MCF 10A (cell line): ENCODE measurements at regions of chr15 and their contacts with region 1.

Region 1: DNA sequence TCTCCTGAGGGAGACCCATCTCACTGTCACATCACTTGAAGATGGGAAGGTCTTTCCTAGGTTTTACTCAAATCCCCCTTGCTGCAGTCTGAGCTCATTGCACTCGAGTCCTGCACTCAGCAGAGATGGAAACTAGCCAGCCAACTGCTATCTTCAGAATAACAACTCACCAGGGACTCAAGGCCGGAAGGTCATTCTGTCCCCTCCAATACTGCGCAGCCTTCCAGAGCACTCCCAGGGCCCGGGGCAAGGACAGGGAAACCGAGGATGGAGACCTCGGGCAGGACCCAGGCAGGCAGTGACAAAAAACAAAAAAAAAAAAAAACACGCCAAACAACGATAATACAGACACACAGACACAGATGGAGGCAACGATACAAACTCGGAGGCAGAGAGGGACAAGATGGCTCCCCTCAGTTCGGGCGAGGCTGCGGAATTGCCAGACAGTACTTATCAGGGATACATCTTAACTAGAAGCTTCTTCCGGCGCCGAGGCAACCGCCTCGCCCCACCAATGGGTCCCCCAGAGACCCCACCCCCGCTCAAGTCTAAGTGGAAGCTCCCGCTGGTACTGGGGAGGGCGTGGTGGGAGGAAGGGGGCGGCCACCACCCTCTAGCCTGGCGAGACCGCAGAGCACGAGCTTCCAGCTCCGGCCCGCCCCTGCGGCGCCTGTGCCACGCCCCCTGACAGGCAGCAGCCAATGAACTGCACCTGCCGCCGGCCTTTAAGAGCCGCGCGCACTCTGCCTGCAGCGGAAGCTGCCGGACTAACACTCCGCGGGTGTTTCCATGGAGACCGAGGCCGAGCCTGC is 7.0 kb upstream of the MAP1A start:
- DNase-seq: peak; percentile 96
- H3K4me3 Mint-ChIP-seq: peak overlapping the region; percentile 94
- H3K27ac Mint-ChIP-seq: peak overlapping the region; percentile 63
- H3K4me1 Mint-ChIP-seq: peaks cover 13% of the 10 kb centered on the region
- H3K27me3 Mint-ChIP-seq: no peaks in the 10 kb centered on the region
- CTCF ChIP-seq: no peak

Region 2: GRCh38 chr15:43081283-43081682 is 429.1 kb before region 1 on chr15:
- CTCF ChIA-PET with region 1: no interaction called
- POLR2A ChIA-PET with region 1: no interaction called
- intact Hi-C with region 1: no loop called
- DNase-seq: no peak
- H3K4me3 Mint-ChIP-seq: no peak overlapping the region
- H3K27ac Mint-ChIP-seq: no peak overlapping the region
- H3K4me1 Mint-ChIP-seq: peaks cover 5% of the 10 kb centered on the region
- H3K27me3 Mint-ChIP-seq: no peaks in the 10 kb centered on the region
- CTCF ChIP-seq: no peak

Region 3: GRCh38 chr15:43440721-43441281 is 69.6 kb before region 1 on chr15:
- CTCF ChIA-PET with region 1: interaction called, 46 read pairs
- POLR2A ChIA-PET with region 1: interaction called, 7 read pairs
- intact Hi-C with region 1: loop called (anchors 1 kb)
- DNase-seq: peak; percentile 97
- H3K4me3 Mint-ChIP-seq: no peak overlapping the region
- H3K27ac Mint-ChIP-seq: no peak overlapping the region
- H3K4me1 Mint-ChIP-seq: peaks cover 6% of the 10 kb centered on the region
- H3K27me3 Mint-ChIP-seq: no peaks in the 10 kb centered on the region
- CTCF ChIP-seq: peak; percentile 61

Region 4: DNA sequence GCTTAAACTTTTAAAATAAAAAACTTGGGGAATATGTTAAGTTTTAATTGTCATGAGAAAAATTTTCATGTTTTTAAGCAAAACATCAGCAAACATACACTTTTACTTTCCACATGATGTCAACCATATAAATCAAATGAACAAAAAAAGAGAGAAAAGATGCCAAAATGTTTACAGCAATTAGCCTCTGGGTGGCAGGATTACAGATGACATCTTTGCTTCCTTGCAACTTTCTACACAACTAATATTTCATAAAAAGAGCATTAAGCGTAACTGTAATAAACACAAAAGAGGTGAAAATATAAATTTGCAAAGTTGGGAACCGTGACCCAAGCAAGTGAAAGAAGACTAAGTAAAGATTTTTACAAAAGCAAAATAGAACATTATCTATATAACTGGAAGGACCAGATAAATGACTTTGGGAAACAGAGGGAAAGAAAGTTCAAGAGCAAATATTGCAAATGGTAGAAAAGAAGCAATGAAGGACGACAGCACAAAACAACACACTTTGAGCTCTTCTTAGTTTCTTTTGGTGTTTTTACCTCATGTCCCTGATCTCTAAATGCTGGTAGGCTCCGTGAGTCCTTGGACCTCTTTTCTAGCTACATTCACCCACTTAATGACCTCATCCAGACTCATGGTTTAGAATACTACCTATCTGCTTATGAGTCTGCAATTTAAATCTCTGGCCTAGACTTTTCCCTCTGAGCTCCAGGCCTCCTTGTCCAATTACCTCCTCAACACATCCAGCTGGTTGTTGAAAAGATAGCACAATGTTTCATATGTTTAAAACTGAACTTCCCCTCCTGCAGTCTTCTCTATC is 26.9 kb before region 1 on chr15:
- CTCF ChIA-PET with region 1: interaction called, 4 read pairs
- POLR2A ChIA-PET with region 1: interaction called, 3 read pairs
- intact Hi-C with region 1: loop called (anchors 1 kb)
- DNase-seq: peak; percentile 8
- H3K4me3 Mint-ChIP-seq: no peak overlapping the region
- H3K27ac Mint-ChIP-seq: no peak overlapping the region
- H3K4me1 Mint-ChIP-seq: peaks cover 14% of the 10 kb centered on the region
- H3K27me3 Mint-ChIP-seq: no peaks in the 10 kb centered on the region
- CTCF ChIP-seq: peak; percentile 36

Region 5: GRCh38 chr15:43492673-43493601 is 17.5 kb before region 1 on chr15 and contains the start of gene TP53BP1:
- CTCF ChIA-PET with region 1: interaction called, 7 read pairs
- POLR2A ChIA-PET with region 1: interaction called, 60 read pairs
- intact Hi-C with region 1: no loop called
- DNase-seq: peak; percentile 91
- H3K4me3 Mint-ChIP-seq: peak within 1 kb of the TSS; percentile 82
- H3K27ac Mint-ChIP-seq: peak within 1 kb of the TSS; percentile 91
- H3K4me1 Mint-ChIP-seq: peaks cover 9% of the 10 kb centered on the region
- H3K27me3 Mint-ChIP-seq: no peaks in the 10 kb centered on the region
- CTCF ChIP-seq: no peak
- total RNA-seq, gene TP53BP1: 38.8 and 53.5 TPM in 2 replicates

Region 6: DNA sequence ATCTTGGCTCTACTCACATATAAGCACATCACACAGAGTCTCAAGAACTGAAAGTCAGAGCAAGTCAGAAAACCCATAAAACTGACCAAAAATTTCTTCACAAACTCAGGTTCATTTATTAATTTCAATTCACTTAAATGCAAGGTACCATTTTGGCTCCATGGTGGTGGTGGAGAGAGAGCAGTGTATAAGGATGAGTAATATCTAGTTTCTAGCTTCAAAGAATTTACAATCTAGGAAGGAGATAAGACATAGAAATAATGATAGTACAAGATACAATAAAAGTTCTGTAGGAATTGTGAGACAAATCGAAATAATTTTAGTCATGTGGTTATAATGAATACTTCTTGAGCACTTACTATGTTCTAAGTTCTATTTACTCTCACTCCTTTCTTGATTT is 10.8 kb before region 1 on chr15:
- CTCF ChIA-PET with region 1: interaction called, 7 read pairs
- POLR2A ChIA-PET with region 1: interaction called, 60 read pairs
- intact Hi-C with region 1: no loop called
- DNase-seq: no peak
- H3K4me3 Mint-ChIP-seq: no peak overlapping the region
- H3K27ac Mint-ChIP-seq: no peak overlapping the region
- H3K4me1 Mint-ChIP-seq: no peaks in the 10 kb centered on the region
- H3K27me3 Mint-ChIP-seq: no peaks in the 10 kb centered on the region
- CTCF ChIP-seq: no peak

Region 7: DNA sequence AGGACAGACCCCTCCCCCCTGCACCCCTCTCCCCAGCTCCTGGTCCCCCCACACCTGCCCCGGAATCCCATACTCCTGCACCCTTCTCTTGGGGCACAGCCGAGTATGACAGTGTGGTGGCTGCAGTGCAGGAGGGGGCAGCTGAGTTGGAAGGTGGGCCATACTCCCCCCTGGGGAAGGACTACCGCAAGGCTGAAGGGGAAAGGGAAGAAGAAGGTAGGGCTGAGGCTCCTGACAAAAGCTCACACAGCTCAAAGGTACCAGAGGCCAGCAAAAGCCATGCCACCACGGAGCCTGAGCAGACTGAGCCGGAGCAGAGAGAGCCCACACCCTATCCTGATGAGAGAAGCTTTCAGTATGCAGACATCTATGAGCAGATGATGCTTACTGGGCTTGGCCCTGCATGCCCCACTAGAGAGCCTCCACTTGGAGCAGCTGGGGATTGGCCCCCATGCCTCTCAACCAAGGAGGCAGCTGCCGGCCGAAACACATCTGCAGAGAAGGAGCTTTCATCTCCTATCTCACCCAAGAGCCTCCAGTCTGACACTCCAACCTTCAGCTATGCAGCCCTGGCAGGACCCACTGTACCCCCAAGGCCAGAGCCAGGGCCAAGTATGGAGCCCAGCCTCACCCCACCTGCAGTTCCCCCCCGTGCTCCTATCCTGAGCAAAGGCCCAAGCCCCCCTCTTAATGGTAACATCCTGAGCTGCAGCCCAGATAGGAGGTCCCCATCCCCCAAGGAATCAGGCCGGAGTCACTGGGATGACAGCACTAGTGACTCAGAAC is 16.8 kb after region 1 on chr15:
- CTCF ChIA-PET with region 1: interaction called, 14 read pairs
- POLR2A ChIA-PET with region 1: no interaction called
- intact Hi-C with region 1: no loop called
- DNase-seq: no peak
- H3K4me3 Mint-ChIP-seq: no peak overlapping the region
- H3K27ac Mint-ChIP-seq: no peak overlapping the region
- H3K4me1 Mint-ChIP-seq: no peaks in the 10 kb centered on the region
- H3K27me3 Mint-ChIP-seq: peaks cover 15% of the 10 kb centered on the region
- CTCF ChIP-seq: no peak

Region 8: GRCh38 chr15:43821505-43821904 is 311.1 kb after region 1 on chr15:
- CTCF ChIA-PET with region 1: no interaction called
- POLR2A ChIA-PET with region 1: no interaction called
- intact Hi-C with region 1: no loop called
- DNase-seq: no peak
- H3K4me3 Mint-ChIP-seq: peak overlapping the region; percentile 6
- H3K27ac Mint-ChIP-seq: no peak overlapping the region
- H3K4me1 Mint-ChIP-seq: peaks cover 20% of the 10 kb centered on the region
- H3K27me3 Mint-ChIP-seq: no peaks in the 10 kb centered on the region
- CTCF ChIP-seq: no peak